GM18951 (cell line): ENCODE measurements at regions of chr2 and their contacts with region 1.

Region 1: GRCh38 chr2:10302479-10303180 is at the start of gene HPCAL1:
- POLR2A ChIP-seq: peak; percentile 63

Region 2: GRCh38 chr2:10378189-10378588 is 75.6 kb after region 1 on chr2:
- in situ Hi-C with region 1: no loop called
- POLR2A ChIP-seq: no peak

Region 3: DNA sequence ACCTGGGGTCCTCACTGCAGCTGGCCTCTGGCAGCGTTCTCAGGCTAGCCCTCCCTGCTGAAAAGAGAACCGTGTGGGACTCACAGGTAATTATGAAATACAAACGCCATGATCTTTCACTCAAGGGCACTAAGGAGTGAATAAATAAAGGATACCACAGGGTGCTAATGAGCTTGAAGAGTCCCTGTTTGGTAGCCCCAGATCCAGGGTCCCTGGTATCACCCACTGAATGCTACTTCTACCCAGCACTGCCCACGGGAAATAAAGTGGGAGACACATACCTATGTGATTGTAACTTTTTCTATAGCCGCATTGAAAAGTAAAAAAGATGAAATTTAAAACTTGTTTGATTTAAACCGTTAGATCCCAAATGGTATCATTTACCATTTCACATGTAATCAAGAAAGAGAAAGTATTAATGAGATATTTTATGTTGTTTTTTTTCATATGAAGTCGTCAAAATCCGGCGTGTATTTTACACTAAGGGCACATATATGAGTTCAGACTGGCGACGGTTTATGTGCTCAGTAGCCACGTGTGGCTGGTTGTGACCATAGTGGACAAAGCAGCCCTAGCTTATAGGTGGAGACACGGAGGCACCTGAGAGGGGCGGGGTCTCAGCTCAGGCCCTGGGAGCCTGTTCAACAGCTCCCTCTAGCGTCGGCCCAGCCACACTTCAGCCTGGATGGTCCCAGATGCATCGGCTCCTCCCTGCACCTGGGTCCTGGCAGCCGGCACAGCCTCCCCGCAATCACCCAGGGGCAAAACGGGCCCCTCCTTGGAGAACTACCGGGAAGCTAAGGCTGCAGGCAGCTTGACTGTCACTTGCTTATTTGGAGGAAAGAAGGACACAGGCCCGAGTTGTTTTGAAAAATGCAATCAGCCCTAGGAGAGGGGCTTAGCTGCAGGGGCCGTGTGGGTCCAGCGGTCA is 106.3 kb after region 1 on chr2:
- in situ Hi-C with region 1: loop called (anchors 10 kb)
- POLR2A ChIP-seq: no peak